ENCODE measurements at regions of chr17 and their contacts with region 1.

Region 1: GRCh38 chr17:62109378-62109902 is 44.4 kb upstream of the MED13 start:
- DNase-seq: peak; percentile 82
- H3K4me3 ChIP-seq: no peak overlapping the region
- H3K27ac ChIP-seq: no peak overlapping the region
- H3K4me1 ChIP-seq: no peaks in the 10 kb centered on the region
- H3K27me3 ChIP-seq: no peaks in the 10 kb centered on the region
- CTCF ChIP-seq: peak; percentile 94 to 96

Region 2: DNA sequence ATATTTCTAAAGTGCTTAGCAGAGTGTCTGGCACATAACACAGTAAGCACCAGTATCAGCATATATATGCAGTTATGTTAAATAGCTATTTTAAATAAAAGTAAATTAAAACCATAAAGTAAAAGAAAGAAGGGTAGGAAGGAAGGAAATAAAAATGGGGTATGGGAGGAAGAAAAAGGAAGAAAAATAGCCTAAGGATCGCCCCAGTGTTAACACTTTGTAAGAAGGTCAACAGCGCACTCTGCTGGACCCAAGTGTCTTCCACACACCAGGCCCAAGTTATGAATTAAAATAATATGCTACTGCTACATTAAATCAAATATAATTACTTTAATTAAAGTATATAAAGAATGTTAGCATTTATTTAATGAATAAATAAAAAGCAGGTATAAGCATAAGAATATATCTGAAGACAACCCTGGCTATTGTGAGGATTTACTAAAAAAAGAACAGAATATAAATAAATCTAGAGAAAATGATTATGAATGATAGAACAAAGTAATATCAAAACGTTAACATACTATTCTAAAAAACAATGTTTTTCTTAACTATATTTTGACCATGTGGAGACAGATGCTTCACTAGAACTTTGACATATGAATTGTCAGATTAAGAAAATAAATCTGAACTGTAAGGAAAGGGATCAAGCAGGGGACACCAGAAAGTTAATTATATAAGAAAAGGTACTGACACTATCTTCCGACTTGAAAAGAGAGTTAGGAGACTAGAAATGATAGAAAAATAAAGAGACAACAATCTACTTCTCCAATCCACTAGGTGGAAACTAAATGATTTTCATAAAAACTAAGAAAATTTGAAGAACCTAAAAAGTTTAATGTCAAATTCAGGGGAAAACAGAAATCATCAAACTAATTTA is 272.0 kb before region 1 on chr17:
- CTCF ChIA-PET with region 1: interaction called, 5 read pairs
- dilution Hi-C with region 1: no loop called
- in situ Hi-C with region 1: no loop called
- intact Hi-C with region 1: loop called (anchors 1 kb)
- DNase-seq: peak; percentile 37
- H3K4me3 ChIP-seq: no peak overlapping the region
- H3K27ac ChIP-seq: no peak overlapping the region
- H3K4me1 ChIP-seq: peaks cover 17% of the 10 kb centered on the region
- H3K27me3 ChIP-seq: no peaks in the 10 kb centered on the region
- CTCF ChIP-seq: peak; percentile 70 to 83

Region 3: GRCh38 chr17:61946359-61946758 is 163.1 kb before region 1 on chr17:
- CTCF ChIA-PET with region 1: no interaction called
- dilution Hi-C with region 1: no loop called
- in situ Hi-C with region 1: no loop called
- intact Hi-C with region 1: loop called (anchors 10 kb)
- DNase-seq: no peak
- H3K4me3 ChIP-seq: no peak overlapping the region
- H3K27ac ChIP-seq: no peak overlapping the region
- H3K4me1 ChIP-seq: no peaks in the 10 kb centered on the region
- H3K27me3 ChIP-seq: no peaks in the 10 kb centered on the region
- CTCF ChIP-seq: no peak

Region 4: DNA sequence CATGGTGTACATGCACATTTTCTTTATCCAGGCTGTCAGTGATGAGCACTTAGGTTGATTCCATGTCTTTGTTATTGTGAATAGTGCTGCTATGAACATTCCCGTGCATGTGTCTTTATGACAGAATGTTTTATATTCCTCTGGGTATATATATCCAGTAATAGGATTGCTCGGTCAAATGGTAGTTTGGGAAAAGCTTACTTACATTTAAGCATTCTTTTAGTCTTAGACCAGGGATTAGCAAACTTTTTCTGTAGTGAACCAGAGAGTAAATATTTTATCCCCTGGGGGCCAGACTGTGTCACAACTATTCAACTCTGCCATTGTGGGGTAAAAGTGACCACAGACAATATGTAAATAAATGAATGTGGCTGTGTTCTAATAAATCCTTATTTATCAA is 84.5 kb before region 1 on chr17:
- CTCF ChIA-PET with region 1: no interaction called
- dilution Hi-C with region 1: no loop called
- in situ Hi-C with region 1: no loop called
- intact Hi-C with region 1: no loop called
- DNase-seq: no peak
- H3K4me3 ChIP-seq: no peak overlapping the region
- H3K27ac ChIP-seq: no peak overlapping the region
- H3K4me1 ChIP-seq: no peaks in the 10 kb centered on the region
- H3K27me3 ChIP-seq: no peaks in the 10 kb centered on the region
- CTCF ChIP-seq: no peak

Region 5: GRCh38 chr17:62179534-62180151 is 70.2 kb after region 1 on chr17:
- CTCF ChIA-PET with region 1: interaction called, 11 read pairs
- dilution Hi-C with region 1: no loop called
- in situ Hi-C with region 1: no loop called
- intact Hi-C with region 1: loop called (anchors 2 kb)
- DNase-seq: peak; percentile 92
- H3K4me3 ChIP-seq: no peak overlapping the region
- H3K27ac ChIP-seq: no peak overlapping the region
- H3K4me1 ChIP-seq: peaks cover 19% of the 10 kb centered on the region
- H3K27me3 ChIP-seq: no peaks in the 10 kb centered on the region
- CTCF ChIP-seq: peak; percentile 41 to 56